ENCODE measurements at regions of chr12 and their contacts with region 1.

Region 1: GRCh38 chr12:21657326-21658077 is at the start of gene LDHB:
- DNase-seq: peak; percentile 79 to 97 (median 94)
- H3K4me3 ChIP-seq: peak within 1 kb of the TSS; percentile 61 to 97 (median 85)
- H3K27ac ChIP-seq: peak within 1 kb of the TSS; percentile 46 to 98 (median 92)
- H3K27me3 ChIP-seq: no peaks in the 10 kb centered on the region
- CTCF ChIP-seq: peak in 2 of 56 donors; percentile 12 to 22
- total RNA-seq, gene LDHB: 411 to 1,004 (median 725) TPM

Region 2: DNA sequence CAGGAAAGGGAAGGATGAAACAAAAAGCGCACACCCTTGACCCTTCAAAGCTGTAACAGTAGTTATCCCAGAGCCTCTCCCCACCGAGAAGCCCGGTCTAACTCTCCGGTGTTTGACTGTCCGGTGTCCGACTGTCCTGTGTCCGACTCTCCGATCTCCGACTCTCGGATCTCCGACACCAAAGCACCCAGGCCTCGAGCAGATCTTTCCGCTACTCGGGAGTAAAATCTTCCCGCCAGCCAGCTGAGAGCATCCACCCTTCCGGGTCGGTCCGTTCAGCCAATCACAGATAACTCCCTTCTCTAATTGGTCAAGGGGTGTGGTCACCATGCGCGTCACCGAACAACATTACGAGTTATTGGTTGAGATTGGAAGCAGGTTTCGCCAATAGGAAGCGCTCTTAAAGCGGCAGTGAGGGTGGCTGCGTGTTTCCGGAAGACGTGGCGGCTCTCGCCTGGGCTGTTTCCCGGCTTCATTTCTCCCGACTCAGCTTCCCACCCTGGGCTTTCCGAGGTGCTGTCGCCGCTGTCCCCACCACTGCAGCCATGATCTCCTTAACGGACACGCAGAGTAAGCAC is 156.0 kb before region 1 on chr12 and contains the starts of genes GOLT1B and RECQL:
- intact Hi-C with region 1: loop called (anchors 10 kb)
- DNase-seq: peak; percentile 68 to 97 (median 94)
- H3K4me3 ChIP-seq: peak within 1 kb of the TSS; percentile 67 to 100 (median 96)
- H3K27ac ChIP-seq: peak within 1 kb of the TSS in 55 of 59 donors; percentile 3 to 90 (median 72)
- H3K27me3 ChIP-seq: no peaks in the 10 kb centered on the region
- CTCF ChIP-seq: peak in 16 of 56 donors; percentile 5 to 42 (median 19)
- total RNA-seq, gene GOLT1B: 21.3 to 60.3 (median 35.8) TPM
- total RNA-seq, gene RECQL: 7.6 to 21.9 (median 13.8) TPM

Region 3: GRCh38 chr12:22624870-22625761 is 967.6 kb after region 1 on chr12 and contains the start of gene ETNK1:
- intact Hi-C with region 1: loop called in 1 of 2 experiments (anchors 5 kb)
- DNase-seq: peak; percentile 95 to 99 (median 96)
- H3K4me3 ChIP-seq: peak within 1 kb of the TSS; percentile 66 to 99 (median 91)
- H3K27ac ChIP-seq: peak within 1 kb of the TSS; percentile 88 to 100 (median 99)
- H3K27me3 ChIP-seq: no peaks in the 10 kb centered on the region
- CTCF ChIP-seq: peak in 24 of 56 donors; percentile 5 to 51 (median 22)
- total RNA-seq, gene ETNK1: 57.3 to 161 (median 106) TPM